AG04449 (cell line): ENCODE measurements at regions of chr1 and their contacts with region 1.

Region 1: DNA sequence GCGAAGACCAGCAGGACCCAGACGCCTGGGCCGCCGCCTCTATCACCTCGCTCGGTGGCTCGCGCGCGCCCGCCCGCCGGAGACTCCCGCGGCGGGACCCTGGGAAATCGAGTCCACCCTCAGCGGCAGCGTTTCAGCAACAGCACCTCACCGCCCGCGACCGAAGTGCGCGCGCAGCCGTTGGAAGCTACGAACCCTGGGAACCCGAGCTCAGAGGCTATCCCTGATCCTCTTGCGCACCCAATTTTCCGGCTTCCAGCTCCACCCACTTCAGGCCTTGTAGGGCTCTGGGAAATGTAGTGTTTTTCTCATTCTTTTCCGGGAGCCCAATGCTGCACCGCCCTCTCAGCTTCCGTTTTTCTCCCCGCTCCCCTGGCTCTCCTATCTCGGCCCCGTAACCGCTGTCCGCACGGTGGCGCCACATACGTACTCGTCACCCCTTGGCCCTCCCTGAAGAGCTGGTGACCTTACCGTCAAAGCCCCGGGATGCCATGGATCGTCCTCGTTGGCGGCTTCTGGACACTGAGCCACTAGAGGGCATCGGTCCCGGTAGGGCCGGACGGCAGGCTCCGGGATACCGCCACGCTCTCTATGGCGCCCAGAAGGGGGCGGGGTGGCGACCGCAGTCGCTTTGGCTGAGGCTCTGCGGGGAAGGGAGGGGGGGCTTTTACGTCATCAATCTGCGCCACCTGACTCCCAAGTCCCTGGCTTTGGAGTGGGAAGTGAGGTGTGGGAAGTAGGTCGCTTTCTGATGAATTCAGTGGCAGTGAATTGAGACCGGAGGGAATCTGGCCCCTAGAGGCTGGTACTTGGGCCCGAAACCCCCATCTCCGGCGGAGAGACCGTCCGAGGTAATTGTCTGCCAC is at the starts of genes ODR4 and TPR:
- DNase-seq: peak; percentile 98
- H3K4me3 ChIP-seq: peak within 1 kb of the TSS; percentile 84
- CTCF ChIP-seq: peak; percentile 86

Region 2: DNA sequence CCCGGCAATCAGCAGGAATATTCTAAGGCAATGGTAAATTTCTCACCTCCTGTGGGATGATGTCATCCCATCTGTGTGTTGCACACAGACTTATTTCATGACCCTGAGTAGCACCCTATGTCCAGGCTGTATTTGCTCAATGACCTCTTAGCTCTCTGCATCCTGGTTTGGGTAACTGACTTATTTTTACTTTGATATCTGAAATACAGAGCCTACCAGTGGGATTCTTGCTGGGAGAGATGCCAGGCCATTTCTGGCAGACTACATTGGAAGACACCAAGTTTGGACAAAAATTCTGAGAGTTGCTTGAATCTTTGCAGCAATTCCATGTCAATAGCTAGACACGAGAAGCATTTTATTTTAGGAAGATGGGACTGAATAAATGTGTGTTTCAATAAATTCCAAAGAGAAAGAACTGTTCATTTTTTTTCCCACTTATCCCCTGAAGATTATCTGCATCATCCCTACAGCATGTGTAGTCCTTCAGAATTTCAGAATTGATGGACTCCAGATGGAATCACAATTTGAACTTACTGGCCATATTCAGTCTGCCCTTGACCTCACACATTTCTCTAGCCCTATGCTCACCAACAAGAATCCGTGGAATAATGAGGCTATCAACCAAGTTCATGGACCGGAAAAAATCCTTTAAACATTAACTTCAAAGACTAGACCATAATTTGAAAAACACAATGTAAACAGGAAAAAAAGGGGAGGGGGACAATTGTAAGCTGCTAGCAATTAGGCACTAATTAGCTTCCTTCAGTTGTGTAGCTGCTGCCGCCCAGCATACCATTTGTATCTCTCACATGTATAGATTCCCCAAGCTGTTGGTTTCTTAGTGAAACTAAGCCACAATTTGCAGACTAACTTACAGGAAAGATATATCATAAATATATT is 414.6 kb before region 1 on chr1:
- CTCF ChIA-PET with region 1: no interaction called
- POLR2A ChIA-PET with region 1: no interaction called
- DNase-seq: peak; percentile 67
- H3K4me3 ChIP-seq: no peak overlapping the region
- CTCF ChIP-seq: no peak

Region 3: DNA sequence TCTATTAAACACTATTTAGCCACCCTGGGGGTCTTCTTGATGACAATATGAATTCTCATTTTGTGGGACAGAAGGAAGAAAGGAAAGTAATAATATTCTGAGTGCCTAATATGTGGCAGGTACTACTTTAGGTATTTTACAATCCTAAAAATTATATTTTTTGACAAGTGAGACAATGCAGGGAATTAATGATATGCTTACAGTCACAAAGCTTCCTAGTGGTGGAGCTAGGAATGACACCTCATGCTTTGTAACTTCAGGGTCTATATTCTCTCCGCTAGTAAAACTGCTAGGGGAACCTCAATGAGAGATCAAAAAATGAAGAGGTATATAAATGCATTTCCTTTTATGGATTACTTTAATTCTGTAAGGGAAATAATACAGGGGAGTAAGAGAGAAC is 44.6 kb before region 1 on chr1:
- CTCF ChIA-PET with region 1: interaction called, 13 read pairs
- POLR2A ChIA-PET with region 1: no interaction called
- DNase-seq: no peak
- H3K4me3 ChIP-seq: no peak overlapping the region
- CTCF ChIP-seq: peak; percentile 10

Region 4: DNA sequence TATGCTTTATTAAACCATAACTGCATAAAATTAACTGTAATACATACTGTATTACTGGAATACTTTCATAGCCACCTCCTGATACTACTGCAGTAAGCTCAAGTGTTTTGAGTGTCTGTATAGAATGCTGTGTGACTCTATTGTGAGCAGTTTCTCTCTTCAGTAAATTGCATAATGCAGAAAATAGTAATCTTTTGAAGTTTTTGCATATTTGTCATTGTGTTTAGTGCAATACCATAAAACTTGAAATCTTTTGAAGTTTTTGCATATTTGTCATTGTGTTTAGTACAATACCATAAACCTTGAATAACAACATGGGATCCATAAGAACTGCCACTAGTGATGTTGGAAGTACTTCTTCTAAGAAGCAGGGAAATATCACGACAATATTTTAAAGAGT is 11.4 kb before region 1 on chr1:
- CTCF ChIA-PET with region 1: interaction called, 21 read pairs
- POLR2A ChIA-PET with region 1: no interaction called
- DNase-seq: no peak
- H3K4me3 ChIP-seq: no peak overlapping the region
- CTCF ChIP-seq: no peak

Region 5: DNA sequence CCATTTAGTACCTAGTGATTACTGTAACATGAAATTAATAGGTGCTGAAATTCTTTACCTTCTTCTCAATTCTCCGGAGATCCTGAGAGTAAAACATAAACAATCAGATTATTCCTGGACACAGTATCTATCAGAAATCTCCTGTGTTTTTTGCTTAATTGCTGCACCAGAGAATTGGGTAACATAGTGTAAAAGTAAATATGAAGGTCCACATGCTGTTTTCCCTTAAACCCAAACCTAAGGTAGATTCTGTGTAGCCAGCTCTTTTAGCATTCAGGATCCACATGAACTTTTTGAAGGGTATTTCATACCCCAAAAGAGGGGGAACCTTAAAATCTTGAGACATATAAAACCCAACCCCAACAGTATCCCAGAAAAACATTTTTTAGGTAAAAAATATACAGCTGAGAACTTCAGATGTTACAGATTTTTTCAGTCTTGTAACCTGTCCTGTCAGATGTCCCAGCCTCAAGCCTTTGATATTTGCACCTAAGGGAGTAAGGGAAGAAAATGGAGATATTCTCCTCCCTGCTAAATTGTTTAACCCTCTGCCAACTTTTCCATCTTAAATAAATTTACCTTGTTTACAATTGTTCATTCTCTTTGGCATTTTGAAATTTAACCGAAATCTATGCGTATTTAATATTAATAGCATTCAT is 11.5 kb after region 1 on chr1:
- CTCF ChIA-PET with region 1: interaction called, 32 read pairs
- POLR2A ChIA-PET with region 1: interaction called, 3 read pairs
- DNase-seq: no peak
- H3K4me3 ChIP-seq: no peak overlapping the region
- CTCF ChIP-seq: no peak

Region 6: DNA sequence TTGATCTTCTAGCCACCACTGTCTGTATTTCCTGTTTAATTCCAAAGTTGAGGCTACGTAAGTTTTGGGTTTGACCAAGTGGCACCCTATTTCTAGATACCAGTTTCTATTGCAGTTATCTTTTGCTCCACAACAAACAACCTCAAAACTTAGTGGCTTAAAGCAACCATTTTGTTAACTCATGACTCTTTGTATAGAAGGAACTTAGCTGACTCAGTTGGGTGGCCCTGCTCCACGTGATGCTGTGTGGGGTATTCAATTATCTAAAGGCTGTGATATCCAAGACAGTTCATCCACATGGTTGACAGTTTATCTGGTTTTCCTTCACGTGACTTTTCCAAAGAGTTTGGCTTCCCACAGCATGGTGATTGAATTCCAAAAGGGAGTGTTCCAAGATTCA is 50.8 kb after region 1 on chr1:
- CTCF ChIA-PET with region 1: no interaction called
- POLR2A ChIA-PET with region 1: no interaction called
- DNase-seq: no peak
- H3K4me3 ChIP-seq: no peak overlapping the region
- CTCF ChIP-seq: no peak